Activated T-helper 2 cell treated with anti-CD3 and anti-CD28 coated beads, Interferon-gamma antibody, Interleukin-2, Interleukin-4, amounts not matched to agents 10 μg/mL and 5 μg/mL and 100 μg/mL, durations not matched to agents 14 hours and 24 hours and 36 hours (primary cell): ENCODE measurements at regions of chr2 and their contacts with region 1.

Region 1: GRCh38 chr2:51107841-51108240 is 75.9 kb upstream of the NRXN1 start:
- DNase-seq: no peak
- H3K4me3 Mint-ChIP-seq: no peak overlapping the region
- H3K27ac Mint-ChIP-seq: no peak overlapping the region
- H3K4me1 Mint-ChIP-seq: no peaks in the 10 kb centered on the region
- H3K27me3 Mint-ChIP-seq: no peaks in the 10 kb centered on the region

Region 2: DNA sequence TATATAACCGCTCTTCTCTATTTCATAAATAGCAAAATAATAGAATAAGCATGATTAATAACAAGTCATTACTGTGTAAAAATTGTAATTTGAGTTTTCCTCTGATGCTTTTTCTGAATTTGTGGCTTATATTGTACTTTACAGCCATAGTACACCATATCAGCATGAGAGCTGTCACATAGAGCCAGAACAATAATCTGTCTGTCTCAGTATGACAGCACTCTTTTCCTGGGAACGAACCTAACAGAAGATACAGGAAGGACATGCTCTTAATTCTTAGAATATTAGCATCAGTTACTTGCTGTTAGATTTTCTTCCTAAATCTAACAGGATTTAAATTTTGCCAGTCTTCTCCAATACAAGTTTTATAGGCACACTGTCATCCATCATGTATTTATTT is 54.6 kb before region 1 on chr2:
- intact Hi-C with region 1: no loop called
- DNase-seq: no peak
- H3K4me3 Mint-ChIP-seq: no peak overlapping the region
- H3K27ac Mint-ChIP-seq: no peak overlapping the region
- H3K4me1 Mint-ChIP-seq: no peaks in the 10 kb centered on the region
- H3K27me3 Mint-ChIP-seq: no peaks in the 10 kb centered on the region

Region 3: DNA sequence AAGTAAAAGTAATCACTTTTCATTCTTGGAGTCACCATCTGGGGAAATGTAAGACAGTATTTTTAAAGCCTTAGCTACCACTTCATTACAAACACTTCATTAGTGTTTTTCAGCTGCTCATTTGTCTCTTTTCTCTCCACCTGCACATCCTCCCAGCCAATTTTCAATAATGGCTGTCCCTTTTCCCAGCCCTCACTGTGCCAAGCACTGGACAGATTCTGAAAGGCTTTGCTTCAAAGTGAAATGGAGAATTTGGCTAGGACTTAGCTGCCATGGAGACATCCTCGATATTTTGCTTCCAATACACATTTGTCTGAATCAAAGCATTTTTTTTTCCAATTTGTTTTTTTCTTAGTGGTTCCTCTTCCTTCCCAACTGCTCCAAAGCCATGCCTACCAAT is 196.5 kb after region 1 on chr2:
- intact Hi-C with region 1: loop called (anchors 5 kb)
- DNase-seq: no peak
- H3K4me3 Mint-ChIP-seq: no peak overlapping the region
- H3K27ac Mint-ChIP-seq: no peak overlapping the region
- H3K4me1 Mint-ChIP-seq: no peaks in the 10 kb centered on the region
- H3K27me3 Mint-ChIP-seq: no peaks in the 10 kb centered on the region